Activated CD4-positive, alpha-beta memory T cell treated with anti-CD3 and anti-CD28 coated beads, Interleukin-2, amount 10 ng/mL, durations not matched to agents 7 days and 5 days (primary cell): ENCODE measurements at regions of chr12 and their contacts with region 1.

Region 1: GRCh38 chr12:57069523-57069922 is 9.1 kb downstream of the NEMP1 start:
- DNase-seq: peak; percentile 65
- H3K4me3 Mint-ChIP-seq: no peak overlapping the region
- H3K27ac Mint-ChIP-seq: peak overlapping the region; percentile 85
- H3K4me1 Mint-ChIP-seq: peaks cover 49% of the 10 kb centered on the region
- H3K27me3 Mint-ChIP-seq: no peaks in the 10 kb centered on the region

Region 2: DNA sequence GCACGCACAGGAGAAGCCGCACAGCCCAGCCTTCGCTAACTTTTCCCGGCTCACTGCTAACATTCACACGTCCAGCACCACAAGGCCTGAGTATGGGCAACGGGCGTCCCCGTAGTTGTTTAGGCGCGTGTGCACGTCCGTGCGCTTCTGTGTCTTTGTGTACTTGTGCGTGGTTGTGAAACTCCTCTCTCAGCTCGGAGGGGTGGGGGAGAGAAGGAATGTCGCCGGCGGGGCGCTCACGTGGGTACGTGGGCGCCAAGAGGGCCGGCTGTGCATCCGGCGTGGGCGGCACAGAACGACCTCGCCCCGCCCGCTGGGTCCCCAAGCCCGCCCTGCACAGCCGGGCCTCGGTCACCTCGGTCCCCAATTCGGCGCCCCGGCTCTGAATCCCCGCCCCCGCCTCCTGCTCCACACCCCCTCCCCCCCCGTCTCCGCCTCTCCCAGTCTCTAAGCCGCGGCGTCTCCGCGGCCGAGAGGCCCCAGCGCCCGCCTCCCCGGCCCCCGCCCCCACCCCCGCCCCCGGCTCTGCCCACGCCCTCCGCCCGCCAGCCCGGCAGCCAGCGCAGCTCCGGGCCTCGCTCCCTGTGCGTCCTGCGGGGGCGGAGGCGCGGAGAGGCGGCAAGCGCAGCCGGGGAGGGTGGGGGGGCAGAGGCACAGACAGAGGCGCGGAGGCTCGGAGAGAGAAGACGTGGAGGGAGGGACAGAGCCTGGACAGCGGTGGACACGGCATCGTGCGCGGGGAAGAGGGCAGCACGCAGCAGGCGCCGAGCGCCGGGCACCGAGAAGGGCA is 19.1 kb after region 1 on chr12 and contains the start of gene NAB2:
- CTCF ChIA-PET with region 1: interaction called, 91 read pairs
- POLR2A ChIA-PET with region 1: interaction called, 14 read pairs
- DNase-seq: peak; percentile 96
- H3K4me3 Mint-ChIP-seq: peak within 1 kb of the TSS; percentile 89
- H3K27ac Mint-ChIP-seq: peak within 1 kb of the TSS; percentile 90
- H3K4me1 Mint-ChIP-seq: peaks cover 64% of the 10 kb centered on the region
- H3K27me3 Mint-ChIP-seq: no peaks in the 10 kb centered on the region
- total RNA-seq, gene NAB2: 8.7 to 9.6 TPM

Region 3: GRCh38 chr12:57118711-57119271 is 49.3 kb after region 1 on chr12:
- CTCF ChIA-PET with region 1: interaction called, 230 read pairs
- POLR2A ChIA-PET with region 1: no interaction called
- DNase-seq: no peak
- H3K4me3 Mint-ChIP-seq: no peak overlapping the region
- H3K27ac Mint-ChIP-seq: no peak overlapping the region
- H3K4me1 Mint-ChIP-seq: peaks cover 2% of the 10 kb centered on the region
- H3K27me3 Mint-ChIP-seq: peaks cover 16% of the 10 kb centered on the region

Region 4: GRCh38 chr12:57124259-57124877 is 54.8 kb after region 1 on chr12:
- CTCF ChIA-PET with region 1: interaction called, 37 read pairs
- POLR2A ChIA-PET with region 1: no interaction called
- DNase-seq: peak; percentile 76
- H3K4me3 Mint-ChIP-seq: no peak overlapping the region
- H3K27ac Mint-ChIP-seq: no peak overlapping the region
- H3K4me1 Mint-ChIP-seq: peaks cover 5% of the 10 kb centered on the region
- H3K27me3 Mint-ChIP-seq: peaks cover 37% of the 10 kb centered on the region

Region 5: DNA sequence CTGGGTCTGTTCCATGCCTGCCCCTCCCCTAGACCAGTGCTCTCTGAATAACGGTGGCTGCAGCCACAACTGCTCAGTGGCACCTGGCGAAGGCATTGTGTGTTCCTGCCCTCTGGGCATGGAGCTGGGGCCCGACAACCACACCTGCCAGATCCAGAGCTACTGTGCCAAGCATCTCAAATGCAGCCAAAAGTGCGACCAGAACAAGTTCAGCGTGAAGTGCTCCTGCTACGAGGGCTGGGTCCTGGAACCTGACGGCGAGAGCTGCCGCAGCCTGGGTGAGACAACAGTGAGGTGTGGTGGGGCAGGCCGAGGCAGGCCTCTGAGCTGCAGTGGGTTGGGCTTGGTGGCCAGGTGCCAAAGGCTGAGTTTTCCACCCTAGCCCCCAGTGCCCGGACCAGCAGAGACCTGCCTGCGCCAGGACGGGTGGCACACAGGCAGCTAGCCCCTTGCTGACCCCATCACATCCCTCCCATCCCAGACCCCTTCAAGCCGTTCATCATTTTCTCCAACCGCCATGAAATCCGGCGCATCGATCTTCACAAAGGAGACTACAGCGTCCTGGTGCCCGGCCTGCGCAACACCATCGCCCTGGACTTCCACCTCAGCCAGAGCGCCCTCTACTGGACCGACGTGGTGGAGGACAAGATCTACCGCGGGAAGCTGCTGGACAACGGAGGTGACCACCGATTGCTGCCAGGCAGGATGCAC is 106.1 kb after region 1 on chr12:
- CTCF ChIA-PET with region 1: interaction called, 32 read pairs
- POLR2A ChIA-PET with region 1: no interaction called
- DNase-seq: peak; percentile 48
- H3K4me3 Mint-ChIP-seq: no peak overlapping the region
- H3K27ac Mint-ChIP-seq: no peak overlapping the region
- H3K4me1 Mint-ChIP-seq: no peaks in the 10 kb centered on the region
- H3K27me3 Mint-ChIP-seq: no peaks in the 10 kb centered on the region

Region 6: DNA sequence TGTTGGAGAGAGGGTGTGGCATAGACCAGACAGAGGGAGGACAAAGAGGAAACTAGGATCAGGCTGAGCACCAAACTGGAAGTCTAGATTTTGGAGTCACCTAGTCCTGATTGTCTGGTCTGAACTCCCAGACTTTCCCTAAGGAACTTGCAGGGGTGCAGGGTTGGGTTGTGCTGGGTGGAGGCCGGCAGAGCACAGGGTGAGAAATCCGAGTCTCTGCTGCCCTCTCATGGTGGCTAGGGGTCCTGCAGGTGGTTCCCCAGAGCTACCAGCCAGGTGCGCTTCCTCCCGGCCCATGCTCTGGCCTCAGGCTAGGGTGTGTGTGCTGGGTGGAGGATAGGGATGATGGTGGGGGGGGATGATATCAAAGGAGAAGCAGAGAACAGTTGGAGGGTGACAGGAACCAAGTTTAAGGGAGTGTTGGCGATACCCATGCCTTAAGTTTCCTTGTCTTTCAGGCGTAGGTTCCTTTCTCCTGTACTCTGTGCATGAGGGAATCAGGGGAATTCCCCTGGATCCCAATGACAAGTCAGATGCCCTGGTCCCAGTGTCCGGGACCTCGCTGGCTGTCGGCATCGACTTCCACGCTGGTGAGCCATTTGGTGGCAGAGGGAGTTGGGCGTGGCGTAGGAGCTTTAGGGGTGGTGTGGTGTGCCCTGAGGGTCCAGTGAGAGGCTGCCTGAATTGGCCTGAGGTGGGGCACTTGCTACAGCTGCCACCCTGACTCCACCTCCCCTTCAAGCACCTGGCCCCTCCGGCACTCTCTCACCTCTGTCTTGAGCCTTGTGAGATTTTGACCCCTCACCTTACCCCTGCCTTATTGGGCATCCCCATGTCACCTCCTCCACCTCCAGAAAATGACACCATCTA is 113.6 kb after region 1 on chr12:
- CTCF ChIA-PET with region 1: interaction called, 13 read pairs
- POLR2A ChIA-PET with region 1: no interaction called
- DNase-seq: peak; percentile 80
- H3K4me3 Mint-ChIP-seq: no peak overlapping the region
- H3K27ac Mint-ChIP-seq: no peak overlapping the region
- H3K4me1 Mint-ChIP-seq: peaks cover 3% of the 10 kb centered on the region
- H3K27me3 Mint-ChIP-seq: no peaks in the 10 kb centered on the region